Cardiac septum (tissue), 1 donor: ENCODE measurements at regions of chr12 and their contacts with region 1.

Region 1: DNA sequence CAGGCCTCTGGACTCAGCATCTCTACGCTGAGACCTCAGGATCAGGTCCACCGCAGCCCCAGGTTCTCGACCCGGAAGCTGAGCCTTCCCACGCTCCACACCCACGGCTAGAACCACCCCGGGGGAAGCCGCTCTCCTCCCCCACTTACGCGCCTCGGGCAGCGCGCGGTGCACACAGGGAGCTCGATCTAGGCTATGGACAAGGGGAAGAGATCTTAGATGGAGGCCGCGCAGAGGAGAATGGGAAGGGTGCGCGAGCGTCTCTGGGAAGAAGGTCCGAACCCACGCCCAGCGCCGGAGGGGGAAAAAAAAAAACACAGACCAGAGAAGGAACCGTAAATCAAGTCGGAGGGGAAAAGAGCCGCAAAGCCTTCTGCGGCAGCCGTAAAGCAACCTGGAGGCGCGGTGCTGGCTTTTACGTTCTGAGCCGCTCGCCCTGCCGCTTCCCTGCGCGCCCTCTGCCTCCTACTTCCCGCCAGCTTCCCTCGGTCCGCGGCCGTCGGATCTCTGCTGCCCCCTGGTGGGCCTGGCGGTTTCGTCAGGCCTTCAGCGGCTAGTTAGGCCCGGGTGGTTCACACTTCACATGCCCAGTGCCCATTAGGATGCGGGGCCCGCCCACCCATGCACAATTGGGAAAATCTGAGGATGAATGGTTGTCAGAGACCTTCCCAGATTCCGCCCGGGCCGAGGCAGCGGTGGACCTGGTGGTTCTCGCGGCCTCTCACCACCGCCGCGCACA is at the start of gene RAD52:
- DNase-seq: peak; percentile 99
- total RNA-seq, gene RAD52: 9.2 TPM

Region 2: DNA sequence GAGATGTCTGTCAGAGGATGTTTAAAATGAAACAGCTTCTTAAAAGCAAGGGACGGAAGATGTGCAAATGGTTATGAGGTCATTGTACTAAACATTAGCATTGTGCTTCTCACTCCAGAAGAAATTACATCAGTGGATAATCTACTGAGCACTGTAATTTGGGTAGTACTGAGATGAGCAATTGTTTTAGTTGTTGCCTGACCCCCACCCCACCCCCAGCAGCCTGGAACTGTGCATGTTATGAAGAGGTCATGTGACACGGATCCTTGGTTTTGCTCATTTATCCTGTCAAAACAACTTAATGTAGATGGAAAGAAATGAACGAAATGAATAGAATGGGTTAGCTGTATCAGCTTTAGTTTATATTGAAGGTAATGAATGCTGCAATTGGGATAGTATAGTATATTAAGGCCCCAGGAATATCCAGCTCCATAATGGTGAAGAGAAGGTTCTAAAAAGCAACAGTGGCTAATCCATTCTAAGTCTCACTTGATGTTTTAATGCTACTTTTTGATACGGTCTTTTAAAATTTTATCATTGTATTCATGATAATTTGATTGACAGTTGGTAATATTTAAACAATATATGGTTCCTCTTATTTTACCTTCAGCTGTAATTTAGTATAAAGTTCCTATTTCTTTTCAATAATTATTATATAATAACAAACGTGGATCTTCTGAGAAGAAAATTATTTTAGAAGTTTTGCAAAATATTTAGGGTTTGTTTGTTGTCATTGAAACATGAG is 138.8 kb before region 1 on chr12:
- intact Hi-C with region 1: loop called (anchors 2 kb)
- DNase-seq: no peak

Region 3: DNA sequence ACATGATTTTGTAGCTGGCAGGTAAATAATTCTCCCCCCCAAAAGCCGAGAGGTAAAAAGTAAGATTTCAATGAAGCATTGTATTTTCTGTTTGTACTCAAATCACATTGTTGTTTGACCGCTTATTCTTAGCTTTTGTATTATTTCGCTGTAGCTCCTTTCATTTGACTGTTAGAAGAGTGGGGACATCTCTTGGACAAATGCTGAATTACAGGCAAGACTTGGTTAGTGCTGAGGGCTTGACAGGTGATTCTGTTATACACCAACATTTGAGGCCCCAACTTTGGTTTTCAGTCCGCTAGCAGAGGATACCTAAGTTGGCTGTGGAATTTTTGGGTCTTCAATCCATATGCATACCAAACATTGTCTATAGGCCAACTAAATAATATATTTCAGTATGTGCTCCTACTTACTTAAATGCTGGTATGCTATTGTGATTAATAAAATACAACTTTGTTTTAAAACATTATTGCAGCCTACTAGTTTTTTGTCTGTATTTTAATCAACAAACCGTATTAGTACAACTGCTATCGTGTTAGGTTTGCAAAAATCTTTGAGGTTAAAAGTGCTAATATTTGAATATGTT is 143.6 kb after region 1 on chr12:
- intact Hi-C with region 1: loop called (anchors 5 kb)
- DNase-seq: no peak

Region 4: GRCh38 chr12:1594261-1595025 is 644.8 kb after region 1 on chr12 and contains the start of gene FBXL14:
- intact Hi-C with region 1: loop called (anchors 10 kb)
- DNase-seq: peak; percentile 93
- total RNA-seq, gene FBXL14: 6.9 TPM